AG04449 (cell line): ENCODE measurements at regions of chr1 and their contacts with region 1.

Region 1: DNA sequence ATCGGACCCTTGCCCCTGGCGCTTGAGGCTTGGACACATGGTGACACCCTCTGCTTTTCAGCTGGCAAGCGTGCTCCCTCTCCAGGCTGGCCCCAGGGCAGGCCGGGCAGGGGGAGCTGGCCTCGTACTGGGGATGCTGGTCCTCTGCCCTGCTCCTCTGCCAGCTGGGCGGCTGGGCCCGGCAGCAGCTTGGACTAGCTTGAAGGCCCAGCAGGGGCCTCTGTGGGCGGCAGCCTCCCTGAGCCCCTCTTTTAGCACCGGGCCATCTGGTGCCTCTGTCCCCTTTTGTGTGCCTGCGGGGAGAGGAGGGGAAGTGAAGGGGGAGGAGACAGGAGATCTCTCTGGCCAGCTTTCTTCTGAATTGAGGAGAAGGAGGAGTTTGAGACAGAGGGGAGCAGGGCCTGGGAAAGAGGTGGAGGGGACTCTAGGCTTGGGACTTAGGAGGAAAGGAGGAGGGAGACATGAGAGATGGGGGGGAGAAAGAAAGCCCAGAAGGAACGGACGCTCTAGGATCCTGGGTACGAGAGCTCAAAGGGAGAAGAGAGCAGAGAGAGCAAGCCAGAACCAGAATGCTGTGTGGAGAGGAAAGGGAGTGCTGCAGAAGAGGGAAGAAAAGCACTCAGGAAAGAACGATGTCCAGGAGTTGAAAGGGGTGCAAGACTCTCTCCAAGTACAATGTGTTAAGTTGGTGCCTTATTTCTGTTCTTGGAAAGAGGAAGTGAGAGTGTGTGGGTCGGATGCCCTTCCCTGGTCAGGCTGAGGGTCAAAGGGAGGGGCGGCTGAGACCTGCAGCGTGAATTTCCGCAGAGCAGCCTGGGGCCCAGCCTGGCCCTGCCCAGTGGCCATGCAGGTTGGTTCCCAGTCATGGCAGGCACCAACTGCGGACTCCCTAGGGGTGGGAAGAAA is 40.3 kb downstream of the IER5 start:
- DNase-seq: no peak
- H3K4me3 ChIP-seq: no peak overlapping the region
- CTCF ChIP-seq: no peak

Region 2: DNA sequence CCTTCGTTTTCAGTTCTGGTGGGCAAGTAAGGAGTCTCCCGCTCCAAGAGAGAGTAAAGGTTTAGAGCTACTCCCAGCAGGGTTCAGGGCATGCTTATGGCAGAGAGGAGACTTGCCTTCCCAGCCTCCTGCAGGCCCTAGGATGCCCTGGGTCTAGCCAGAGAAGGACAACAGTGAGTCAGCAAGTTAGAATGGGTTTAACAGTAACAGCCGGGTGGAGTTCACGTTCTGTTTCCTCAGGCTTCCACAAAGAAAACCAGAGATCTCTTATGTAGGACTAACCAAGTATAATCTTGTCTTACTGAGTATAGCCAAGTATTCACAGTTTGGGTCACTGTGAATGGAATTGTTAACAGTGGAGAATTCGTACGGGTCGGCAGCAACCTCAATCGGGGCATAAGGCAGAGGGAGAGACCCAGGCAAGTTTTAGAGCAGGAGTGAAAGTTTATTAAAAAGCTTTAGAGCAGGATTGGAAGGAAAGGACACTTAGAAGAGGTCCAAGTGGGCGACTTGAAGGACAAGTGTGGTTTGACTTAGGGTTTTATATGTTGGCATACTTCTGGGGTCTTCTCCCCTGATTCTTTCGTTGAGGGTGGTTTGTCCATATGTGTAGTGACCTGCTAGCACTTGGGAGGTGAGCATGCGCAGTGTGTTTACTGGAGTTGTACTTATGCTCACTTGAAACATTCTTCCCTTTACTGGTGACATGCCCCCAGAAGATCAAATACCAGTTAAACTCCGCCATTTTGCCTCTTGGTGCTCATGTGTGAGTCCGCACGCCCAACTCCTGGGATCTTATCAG is 565.6 kb before region 1 on chr1:
- CTCF ChIA-PET with region 1: no interaction called
- POLR2A ChIA-PET with region 1: no interaction called
- DNase-seq: no peak
- H3K4me3 ChIP-seq: no peak overlapping the region
- CTCF ChIP-seq: no peak

Region 3: DNA sequence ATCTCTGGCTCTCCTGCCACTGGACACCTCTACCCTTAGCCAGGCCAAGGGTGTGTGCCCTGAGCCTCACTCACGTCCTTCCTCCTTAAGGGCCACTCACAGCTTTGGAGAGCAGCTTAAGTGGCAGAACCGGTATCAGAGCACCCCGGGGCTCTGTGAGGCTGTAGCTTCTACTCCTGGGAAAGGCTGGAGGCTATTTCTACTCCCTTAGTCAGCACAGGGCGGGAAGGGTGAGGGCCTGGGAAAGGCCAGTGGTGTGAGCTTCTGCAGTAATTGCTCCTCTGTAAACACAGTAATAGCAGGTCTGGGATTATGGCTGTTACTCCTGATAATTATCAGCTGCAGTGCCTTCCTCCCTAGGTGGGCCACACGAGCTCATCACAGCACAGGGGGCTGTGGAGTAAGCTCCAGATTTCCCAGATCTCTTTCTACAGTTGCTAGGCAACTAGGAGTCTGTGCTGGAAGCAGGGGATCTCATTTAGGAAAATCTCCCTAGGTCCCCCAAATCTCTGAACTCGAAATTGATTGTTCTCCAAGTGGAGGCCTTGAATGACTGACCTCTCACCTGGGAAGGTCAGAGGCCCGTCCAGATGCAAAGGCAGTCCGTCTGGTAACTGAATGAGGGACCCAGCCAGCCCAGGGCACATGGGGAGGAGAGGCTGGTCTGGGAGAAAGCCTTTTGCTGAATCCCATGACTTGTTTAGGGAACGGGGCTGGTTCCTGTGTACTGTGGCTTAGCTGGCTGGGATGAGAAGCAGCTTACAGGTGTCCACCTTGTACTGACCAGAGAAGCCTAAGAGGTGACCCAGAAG is 11.0 kb before region 1 on chr1:
- CTCF ChIA-PET with region 1: interaction called, 16 read pairs
- POLR2A ChIA-PET with region 1: no interaction called
- DNase-seq: no peak
- H3K4me3 ChIP-seq: no peak overlapping the region
- CTCF ChIP-seq: no peak

Region 4: GRCh38 chr1:181562395-181562794 is 433.6 kb after region 1 on chr1:
- CTCF ChIA-PET with region 1: no interaction called
- POLR2A ChIA-PET with region 1: no interaction called
- DNase-seq: no peak
- H3K4me3 ChIP-seq: no peak overlapping the region
- CTCF ChIP-seq: no peak